Activated CD8-positive, alpha-beta T cell treated with anti-CD3 and anti-CD28 coated beads for 36 hours (primary cell): ENCODE measurements at regions of chr13 and their contacts with region 1.

Region 1: GRCh38 chr13:73835138-73835721 is 299.0 kb downstream of the KLF12 start:
- DNase-seq: no peak
- ATAC-seq: peak; percentile 64
- H3K4me3 Mint-ChIP-seq: no peak overlapping the region
- H3K27ac Mint-ChIP-seq: no peak overlapping the region
- H3K4me1 Mint-ChIP-seq: peaks cover 38% of the 10 kb centered on the region
- H3K27me3 Mint-ChIP-seq: no peaks in the 10 kb centered on the region
- CTCF ChIP-seq: peak; percentile 87

Region 2: DNA sequence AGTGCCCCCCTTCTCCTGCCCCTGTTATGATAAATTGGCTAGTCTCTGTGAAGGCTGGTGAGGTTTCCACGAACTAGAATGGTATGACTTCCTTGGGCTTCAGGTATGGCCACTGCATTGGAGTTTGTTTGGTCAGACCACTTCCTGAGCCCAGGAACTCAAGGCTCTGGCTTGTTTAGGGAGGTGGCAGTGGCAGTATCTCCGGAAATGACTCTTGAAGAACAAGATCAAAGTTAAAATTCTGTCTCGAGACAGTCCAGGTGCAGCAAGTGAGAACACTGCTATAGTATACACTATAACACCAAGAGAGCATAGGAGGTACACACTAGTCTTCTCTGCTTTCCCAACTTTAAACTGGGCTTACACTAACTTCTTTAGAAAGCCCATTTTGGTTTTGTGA is 10.1 kb before region 1 on chr13:
- CTCF ChIA-PET with region 1: interaction called, 10 read pairs
- POLR2A ChIA-PET with region 1: no interaction called
- intact Hi-C with region 1: no loop called
- DNase-seq: peak; percentile 5
- ATAC-seq: peak; percentile 55
- H3K4me3 Mint-ChIP-seq: no peak overlapping the region
- H3K27ac Mint-ChIP-seq: no peak overlapping the region
- H3K4me1 Mint-ChIP-seq: peaks cover 52% of the 10 kb centered on the region
- H3K27me3 Mint-ChIP-seq: no peaks in the 10 kb centered on the region
- CTCF ChIP-seq: no peak

Region 3: DNA sequence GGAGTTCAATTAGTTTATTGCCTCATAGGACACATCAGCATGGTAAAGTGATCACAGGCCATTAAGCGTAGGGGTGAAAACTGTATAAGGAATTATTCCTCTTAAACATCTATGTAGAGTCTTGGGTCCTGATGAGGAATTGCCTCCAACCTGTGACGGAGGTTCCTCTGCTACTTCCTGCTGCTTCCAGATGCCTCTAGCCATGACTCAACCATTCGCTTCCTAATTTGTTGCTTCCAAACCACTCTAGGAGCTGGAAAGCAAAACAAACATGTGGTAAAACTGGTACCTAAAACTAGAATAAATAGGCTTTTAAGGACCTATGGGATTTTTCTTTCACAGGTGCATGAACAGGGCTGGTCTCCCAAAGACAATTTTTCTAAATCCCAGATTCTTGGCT is 45.1 kb after region 1 on chr13:
- CTCF ChIA-PET with region 1: no interaction called
- POLR2A ChIA-PET with region 1: no interaction called
- intact Hi-C with region 1: no loop called
- DNase-seq: no peak
- ATAC-seq: no peak
- H3K4me3 Mint-ChIP-seq: no peak overlapping the region
- H3K27ac Mint-ChIP-seq: peak overlapping the region; percentile 1
- H3K4me1 Mint-ChIP-seq: peaks cover 42% of the 10 kb centered on the region
- H3K27me3 Mint-ChIP-seq: no peaks in the 10 kb centered on the region
- CTCF ChIP-seq: no peak